IMR-90 (cell line): ENCODE measurements at regions of chr6 and their contacts with region 1.

Region 1: DNA sequence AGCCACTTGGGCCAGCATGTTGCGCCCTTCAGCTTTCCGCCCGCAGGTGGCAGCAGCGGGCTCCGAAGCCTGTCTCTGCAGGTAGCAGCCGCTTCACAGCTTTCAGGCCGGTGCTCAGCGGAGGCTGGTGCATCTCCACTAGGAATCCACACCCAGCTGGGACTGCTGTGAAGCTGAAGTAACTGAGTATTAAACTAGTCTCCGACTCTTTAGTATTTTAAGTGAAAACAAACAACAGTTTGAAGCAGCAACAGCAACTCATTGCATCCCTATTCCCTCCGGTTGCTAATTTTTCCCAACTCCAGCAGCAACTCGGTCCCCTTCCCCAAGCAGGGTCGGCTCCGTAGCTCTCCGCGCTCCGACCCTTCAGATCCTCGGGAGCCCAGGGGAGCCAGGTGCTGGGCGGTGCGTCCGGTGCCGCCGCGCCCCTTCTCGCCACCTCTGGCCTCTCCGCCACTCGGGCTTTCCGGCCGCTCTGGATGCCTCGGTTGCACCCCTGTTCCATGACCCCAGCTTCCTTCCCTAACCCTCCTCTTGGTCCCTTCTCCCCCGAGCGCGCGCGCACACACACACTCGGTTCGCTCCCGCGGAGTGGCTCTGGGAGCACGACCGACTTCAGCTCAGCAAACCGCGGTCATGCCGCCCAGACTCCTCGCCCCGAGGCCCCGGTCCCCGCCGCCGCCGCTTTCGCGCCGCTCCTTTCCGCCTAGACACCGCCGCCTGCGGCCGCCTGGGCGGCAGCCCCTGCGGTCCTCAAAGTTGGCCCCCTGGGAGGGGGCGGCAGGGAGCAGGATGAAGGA is 768 bp upstream of the NKAIN2 start:
- DNase-seq: peak; percentile 54
- ATAC-seq: peak; percentile 97
- H3K4me3 ChIP-seq: peak overlapping the region; percentile 37
- H3K27ac ChIP-seq: no peak overlapping the region
- H3K4me1 ChIP-seq: peaks cover 2% of the 10 kb centered on the region; the same call in 1 of the 2 replicates
- H3K27me3 ChIP-seq: peaks cover 11% of the 10 kb centered on the region
- CTCF ChIP-seq: peak; percentile 81
- POLR2A ChIP-seq: no peak
- RAD21 ChIP-seq: peak; percentile 78

Region 2: GRCh38 chr6:123777563-123777962 is 25.3 kb before region 1 on chr6:
- CTCF ChIA-PET with region 1: no interaction called
- POLR2A ChIA-PET with region 1: no interaction called
- dilution Hi-C with region 1: no loop called
- in situ Hi-C with region 1: no loop called
- intact Hi-C with region 1: no loop called
- DNase-seq: peak; percentile 1
- ATAC-seq: no peak
- H3K4me3 ChIP-seq: no peak overlapping the region
- H3K27ac ChIP-seq: no peak overlapping the region
- H3K4me1 ChIP-seq: no peaks in the 10 kb centered on the region
- H3K27me3 ChIP-seq: no peaks in the 10 kb centered on the region
- CTCF ChIP-seq: peak; percentile 25
- POLR2A ChIP-seq: no peak
- RAD21 ChIP-seq: peak; percentile 32

Region 3: DNA sequence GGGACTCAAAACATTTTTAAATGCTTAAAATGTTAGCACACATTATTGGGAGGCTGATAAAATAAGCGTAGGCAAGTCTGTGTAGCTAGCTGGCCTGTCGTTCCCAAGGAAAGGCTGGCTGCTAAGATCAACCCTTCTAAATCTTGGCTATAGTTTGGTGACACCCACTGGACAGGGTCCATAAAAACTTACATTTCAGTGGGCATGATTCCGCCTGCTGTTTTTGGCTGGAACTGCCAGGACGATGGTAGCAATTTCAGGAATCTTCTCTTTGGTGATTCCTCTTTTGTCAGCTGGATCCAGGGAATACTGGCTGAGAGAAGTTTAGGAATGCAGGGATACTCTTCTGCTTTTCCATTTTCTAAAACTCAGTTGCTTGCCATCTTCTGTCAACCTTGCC is 163.0 kb after region 1 on chr6:
- CTCF ChIA-PET with region 1: interaction called, 3 read pairs
- POLR2A ChIA-PET with region 1: no interaction called
- dilution Hi-C with region 1: no loop called
- in situ Hi-C with region 1: loop called (anchors 10 kb)
- intact Hi-C with region 1: loop called (anchors 1 kb)
- DNase-seq: peak; percentile 23
- ATAC-seq: peak; percentile 44; the same call in 1 of the 2 replicates
- H3K4me3 ChIP-seq: no peak overlapping the region
- H3K27ac ChIP-seq: no peak overlapping the region
- H3K4me1 ChIP-seq: no peaks in the 10 kb centered on the region
- H3K27me3 ChIP-seq: no peaks in the 10 kb centered on the region
- CTCF ChIP-seq: peak; percentile 59
- POLR2A ChIP-seq: no peak
- RAD21 ChIP-seq: peak; percentile 67

Region 4: DNA sequence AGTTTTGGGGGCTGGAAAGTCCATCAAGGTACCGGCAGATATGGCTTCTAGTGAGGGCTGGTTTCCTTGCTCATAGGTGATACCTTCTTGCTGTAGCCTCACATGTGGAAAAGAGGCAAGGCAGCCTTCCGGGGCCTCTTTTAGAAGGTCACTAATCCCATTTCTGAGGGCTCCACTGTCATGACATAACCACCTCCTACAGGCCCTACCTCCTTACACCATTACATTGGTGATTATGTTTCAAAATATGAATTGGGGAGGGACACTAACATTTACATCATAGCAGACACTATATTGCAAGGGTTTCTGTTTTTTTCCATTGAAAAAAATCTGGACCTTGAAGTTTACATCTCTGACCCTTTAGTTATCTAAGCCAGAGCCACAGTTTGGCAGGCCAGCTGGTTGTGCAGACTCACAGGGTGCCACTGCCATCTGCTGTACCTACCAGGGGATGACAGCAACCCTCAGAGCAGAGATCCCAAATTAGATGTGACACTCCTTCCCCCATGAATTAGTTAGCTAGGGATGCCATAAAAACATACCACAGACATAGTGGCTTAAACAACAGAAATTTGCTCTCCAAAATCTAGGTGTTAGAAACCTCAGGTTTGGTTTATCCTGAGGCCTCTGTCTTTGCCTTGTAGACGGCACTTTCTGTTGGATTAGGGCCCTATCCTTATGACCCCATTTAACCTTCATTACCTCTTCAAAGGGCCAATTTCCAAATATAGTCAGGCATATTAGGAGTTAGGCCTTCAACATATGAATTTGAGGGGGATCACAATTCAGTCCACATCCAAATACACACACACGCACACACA is 993.0 kb after region 1 on chr6:
- CTCF ChIA-PET with region 1: interaction called, 4 read pairs
- POLR2A ChIA-PET with region 1: no interaction called
- dilution Hi-C with region 1: no loop called
- in situ Hi-C with region 1: no loop called
- intact Hi-C with region 1: loop called (anchors 1 kb)
- DNase-seq: peak; percentile 1
- ATAC-seq: peak; percentile 68
- H3K4me3 ChIP-seq: no peak overlapping the region
- H3K27ac ChIP-seq: no peak overlapping the region
- H3K4me1 ChIP-seq: no peaks in the 10 kb centered on the region
- H3K27me3 ChIP-seq: no peaks in the 10 kb centered on the region
- CTCF ChIP-seq: 0 out of 2 replicates have a peak, but pooled peaks have one; percentile 31
- POLR2A ChIP-seq: no peak
- RAD21 ChIP-seq: peak; percentile 55

Region 5: DNA sequence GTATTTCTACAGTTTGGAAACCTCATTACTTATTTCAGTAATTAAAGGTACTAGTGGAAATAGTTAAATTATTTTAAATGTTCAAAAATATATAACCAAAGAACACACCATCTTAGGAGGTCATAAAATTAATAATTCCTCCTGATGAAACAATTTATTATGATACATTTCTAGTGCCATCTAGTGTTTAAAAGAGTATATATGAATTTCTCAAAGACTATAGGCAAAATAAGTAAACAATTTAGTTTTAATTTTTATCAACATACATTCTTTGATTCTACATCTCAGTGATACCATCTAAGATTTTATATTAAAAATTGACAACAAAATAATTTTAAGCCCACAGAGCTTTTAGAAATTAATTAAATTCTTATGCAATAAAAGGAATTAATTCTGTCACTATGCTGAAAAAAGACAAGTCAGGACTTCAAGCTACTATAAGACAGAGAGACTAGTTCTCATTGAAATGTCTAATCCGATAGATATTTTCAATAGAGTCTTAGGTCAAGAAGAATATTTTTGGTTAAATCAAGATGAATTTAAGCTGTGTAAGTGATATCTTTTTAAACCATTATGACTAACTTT is 1051.5 kb after region 1 on chr6:
- CTCF ChIA-PET with region 1: interaction called, 7 read pairs
- POLR2A ChIA-PET with region 1: no interaction called
- dilution Hi-C with region 1: no loop called
- in situ Hi-C with region 1: no loop called
- intact Hi-C with region 1: loop called (anchors 1 kb)
- DNase-seq: no peak
- ATAC-seq: no peak
- H3K4me3 ChIP-seq: no peak overlapping the region
- H3K27ac ChIP-seq: no peak overlapping the region
- H3K4me1 ChIP-seq: peaks cover 3% of the 10 kb centered on the region
- H3K27me3 ChIP-seq: no peaks in the 10 kb centered on the region
- CTCF ChIP-seq: peak; percentile 31; the same call in 1 of the 2 replicates
- POLR2A ChIP-seq: no peak
- RAD21 ChIP-seq: 0 out of 2 replicates have a peak, but pooled peaks have one; percentile 15